Ascending aorta (tissue), 2 donors: ENCODE measurements at regions of chr19 and their contacts with region 1.

Region 1: DNA sequence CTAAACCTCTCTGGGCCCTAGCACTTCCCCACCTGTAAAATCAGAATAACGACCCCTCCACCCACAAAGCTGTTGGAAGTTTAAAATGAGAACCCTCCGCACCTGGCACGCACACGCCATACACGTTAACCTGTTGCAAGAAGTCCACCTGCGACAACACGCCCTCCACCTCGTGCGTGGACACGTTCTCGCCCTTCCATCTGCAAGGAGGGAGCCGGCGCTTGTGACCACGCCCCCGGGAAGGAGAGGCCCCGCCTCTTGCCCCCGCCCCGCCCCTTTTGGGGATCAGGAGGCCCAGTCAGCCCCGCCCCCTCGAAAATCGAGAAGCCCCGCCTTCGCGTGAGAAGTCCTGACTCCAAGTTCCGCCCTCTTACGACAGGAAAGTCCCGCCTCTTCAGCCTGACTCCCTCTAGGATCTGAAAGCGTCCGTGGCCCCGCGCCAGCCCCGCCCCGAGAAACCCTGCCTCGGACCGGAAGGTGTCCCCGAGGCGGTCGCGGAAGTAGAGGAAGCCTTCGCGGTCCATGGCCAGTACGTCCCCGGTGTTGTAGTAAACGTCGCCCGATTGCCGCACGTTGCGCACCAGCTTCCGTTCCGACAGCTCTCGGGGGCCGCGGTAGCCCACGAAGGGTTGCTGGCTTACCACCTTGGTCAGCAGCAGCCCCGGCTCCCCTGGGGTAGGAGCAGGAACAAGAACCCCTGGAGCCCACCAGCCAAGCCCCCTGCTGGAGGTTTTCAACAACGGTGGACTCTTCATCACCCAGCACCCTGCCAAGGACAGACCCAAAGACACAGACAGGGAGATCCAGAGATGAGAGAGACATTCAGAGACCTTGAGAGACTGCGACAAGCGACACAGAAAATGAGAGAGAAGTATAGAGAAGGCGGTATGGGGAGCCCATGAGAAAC is 12.5 kb downstream of the SLC27A5 start:
- DNase-seq: peak; percentile 96 to 100
- H3K4me3 ChIP-seq: peak overlapping the region; percentile 60 to 64
- H3K27ac ChIP-seq: peak overlapping the region; percentile 76 to 79
- H3K4me1 ChIP-seq: peaks cover 11 to 18% of the 10 kb centered on the region in 2 donors
- H3K27me3 ChIP-seq: no peaks in the 10 kb centered on the region
- CTCF ChIP-seq: peak in 2 of 3 experiments; percentile 10 to 42

Region 2: DNA sequence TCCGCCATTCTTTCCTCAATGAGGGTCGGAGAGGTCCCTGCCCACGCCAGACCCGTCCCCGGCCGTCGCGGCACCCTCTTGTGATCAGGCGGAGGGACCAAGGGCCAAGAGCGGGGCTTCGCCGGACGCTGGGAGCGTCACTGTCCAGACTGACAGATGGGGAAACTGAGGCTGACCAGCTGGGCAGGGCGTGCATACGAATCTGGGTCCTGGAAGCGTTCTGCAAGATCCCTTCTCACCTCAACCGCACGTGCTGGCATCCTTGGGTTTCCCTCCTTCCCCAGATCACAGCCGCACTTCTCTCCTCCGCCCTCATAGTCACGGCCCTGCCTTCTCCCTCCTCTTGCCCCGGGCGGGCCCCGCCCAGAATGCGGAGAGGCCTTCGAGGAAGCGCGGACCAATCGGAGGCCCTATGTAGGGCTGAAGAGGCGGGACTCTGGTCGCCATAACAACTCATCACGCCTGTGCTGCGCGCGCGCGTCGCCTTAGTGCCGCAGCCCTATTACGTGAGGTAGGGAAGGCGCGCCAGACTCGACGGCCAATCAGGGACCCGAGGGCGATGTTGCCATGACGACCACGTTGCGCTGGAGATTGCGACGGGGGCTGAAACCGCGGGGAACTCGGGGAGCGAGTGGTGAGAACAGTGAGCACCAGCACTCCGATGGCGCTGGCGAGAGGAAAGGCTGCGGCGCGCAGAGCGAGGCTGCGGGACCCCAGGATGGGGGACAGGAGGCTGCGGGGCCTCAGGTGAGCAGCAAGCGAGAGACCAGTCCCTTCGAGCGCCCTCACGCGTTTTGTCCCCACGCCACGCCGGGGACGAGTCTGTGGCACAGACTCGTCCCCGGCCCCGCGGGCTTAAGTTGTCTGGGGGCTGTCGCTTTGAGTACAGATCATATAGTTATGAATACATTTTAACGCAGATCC is 98.1 kb before region 1 on chr19:
- intact Hi-C with region 1: loop called (anchors 2 kb)
- DNase-seq: peak; percentile 99
- H3K4me3 ChIP-seq: peak overlapping the region; percentile 66 to 67
- H3K27ac ChIP-seq: no peak overlapping the region
- H3K4me1 ChIP-seq: peaks cover 7 to 10% of the 10 kb centered on the region in 2 donors
- H3K27me3 ChIP-seq: no peaks in the 10 kb centered on the region
- CTCF ChIP-seq: peak in 1 of 3 experiments; percentile 30

Region 3: GRCh38 chr19:58416604-58417003 is 82.7 kb before region 1 on chr19:
- intact Hi-C with region 1: no loop called
- DNase-seq: no peak
- H3K4me3 ChIP-seq: no peak overlapping the region
- H3K27ac ChIP-seq: no peak overlapping the region
- H3K4me1 ChIP-seq: no peaks in the 10 kb centered on the region
- H3K27me3 ChIP-seq: no peaks in the 10 kb centered on the region
- CTCF ChIP-seq: no peak

Region 4: GRCh38 chr19:58439576-58440554 is 59.4 kb before region 1 on chr19 and contains the start of gene ZNF132:
- intact Hi-C with region 1: no loop called
- DNase-seq: peak; percentile 98 to 99
- H3K4me3 ChIP-seq: peak within 1 kb of the TSS; percentile 71 to 72
- H3K27ac ChIP-seq: peak within 1 kb of the TSS; percentile 85 to 89
- H3K4me1 ChIP-seq: peaks cover 4 to 14% of the 10 kb centered on the region in 2 donors
- H3K27me3 ChIP-seq: no peaks in the 10 kb centered on the region
- CTCF ChIP-seq: no peak
- total RNA-seq, gene ZNF132: 5.2 TPM

Region 5: GRCh38 chr19:58451358-58452101 is 47.7 kb before region 1 on chr19 and contains the start of gene ZNF324B:
- intact Hi-C with region 1: loop called (anchors 1 kb)
- DNase-seq: peak; percentile 89 to 98
- H3K4me3 ChIP-seq: peak within 1 kb of the TSS; percentile 68 to 82
- H3K27ac ChIP-seq: peak within 1 kb of the TSS; percentile 35 to 54
- H3K4me1 ChIP-seq: no peaks in the 10 kb centered on the region
- H3K27me3 ChIP-seq: no peaks in the 10 kb centered on the region
- CTCF ChIP-seq: no peak
- total RNA-seq, gene ZNF324B: 2.2 TPM

Region 6: GRCh38 chr19:58466760-58467589 is 32.3 kb before region 1 on chr19 and contains the start of gene ZNF324:
- intact Hi-C with region 1: loop called (anchors 1 kb)
- DNase-seq: peak; percentile 93 to 99
- H3K4me3 ChIP-seq: peak within 1 kb of the TSS; percentile 95 to 96
- H3K27ac ChIP-seq: peak within 1 kb of the TSS; percentile 84 to 88
- H3K4me1 ChIP-seq: peaks cover 0 to 10% of the 10 kb centered on the region in 2 donors
- H3K27me3 ChIP-seq: no peaks in the 10 kb centered on the region
- CTCF ChIP-seq: no peak
- total RNA-seq, gene ZNF324: 2.1 TPM

Region 7: DNA sequence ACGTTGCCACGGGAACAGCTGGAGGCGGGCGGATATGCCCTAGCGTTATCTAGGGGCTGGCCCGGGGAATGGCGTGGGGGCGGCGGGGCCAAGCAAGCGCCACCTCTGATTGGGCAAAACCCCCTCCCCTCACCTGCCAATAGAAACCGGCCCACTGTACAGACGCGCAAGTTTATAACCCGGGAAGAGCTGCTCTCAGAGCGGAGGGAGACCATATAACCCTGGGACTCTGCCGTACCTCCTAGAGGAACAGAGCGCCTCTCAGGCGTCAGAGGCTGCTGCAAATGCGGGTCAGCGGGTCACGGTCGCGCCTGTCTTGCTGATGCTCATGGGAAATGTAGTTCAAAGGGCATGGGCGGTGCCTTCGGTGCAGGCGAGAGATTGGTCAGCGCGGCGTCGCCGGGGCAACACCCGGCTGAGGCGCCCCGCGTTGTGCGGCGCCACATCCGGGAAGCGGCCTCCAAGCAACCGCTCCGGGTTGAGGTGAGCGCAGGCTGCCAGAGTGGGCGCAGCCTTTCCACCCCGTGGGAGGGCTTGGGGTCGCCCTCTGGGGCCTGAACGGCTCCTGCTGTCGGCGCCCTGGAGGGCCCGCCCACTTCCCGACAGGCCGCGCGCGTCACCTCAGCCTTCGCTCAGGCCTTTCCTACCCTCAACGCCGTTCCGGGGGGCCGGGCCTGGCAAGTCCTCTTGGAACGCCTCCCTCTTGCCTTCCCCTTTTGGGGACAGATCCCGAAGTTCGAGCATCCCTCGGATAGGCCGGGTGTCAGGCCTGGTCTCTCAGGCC is 23.4 kb before region 1 on chr19 and contains the start of gene ZNF446:
- intact Hi-C with region 1: loop called (anchors 1 kb)
- DNase-seq: peak; percentile 93 to 99
- H3K4me3 ChIP-seq: peak within 1 kb of the TSS; percentile 65 to 68
- H3K27ac ChIP-seq: peak within 1 kb of the TSS; percentile 84 to 93
- H3K4me1 ChIP-seq: peaks cover 3 to 15% of the 10 kb centered on the region in 2 donors
- H3K27me3 ChIP-seq: no peaks in the 10 kb centered on the region
- CTCF ChIP-seq: no peak
- total RNA-seq, gene ZNF446: 42.7 TPM

Region 8: GRCh38 chr19:58543826-58544590 is 44.7 kb after region 1 on chr19 and contains the start of gene TRIM28:
- intact Hi-C with region 1: loop called (anchors 1 kb)
- DNase-seq: peak; percentile 95 to 99
- H3K4me3 ChIP-seq: peak within 1 kb of the TSS; percentile 75 to 82
- H3K27ac ChIP-seq: peak within 1 kb of the TSS; percentile 90 to 94
- H3K4me1 ChIP-seq: peaks cover 15 to 25% of the 10 kb centered on the region in 2 donors
- H3K27me3 ChIP-seq: no peaks in the 10 kb centered on the region
- CTCF ChIP-seq: peak in 1 of 3 experiments; percentile 6
- total RNA-seq, gene TRIM28: 222 TPM

Region 9: DNA sequence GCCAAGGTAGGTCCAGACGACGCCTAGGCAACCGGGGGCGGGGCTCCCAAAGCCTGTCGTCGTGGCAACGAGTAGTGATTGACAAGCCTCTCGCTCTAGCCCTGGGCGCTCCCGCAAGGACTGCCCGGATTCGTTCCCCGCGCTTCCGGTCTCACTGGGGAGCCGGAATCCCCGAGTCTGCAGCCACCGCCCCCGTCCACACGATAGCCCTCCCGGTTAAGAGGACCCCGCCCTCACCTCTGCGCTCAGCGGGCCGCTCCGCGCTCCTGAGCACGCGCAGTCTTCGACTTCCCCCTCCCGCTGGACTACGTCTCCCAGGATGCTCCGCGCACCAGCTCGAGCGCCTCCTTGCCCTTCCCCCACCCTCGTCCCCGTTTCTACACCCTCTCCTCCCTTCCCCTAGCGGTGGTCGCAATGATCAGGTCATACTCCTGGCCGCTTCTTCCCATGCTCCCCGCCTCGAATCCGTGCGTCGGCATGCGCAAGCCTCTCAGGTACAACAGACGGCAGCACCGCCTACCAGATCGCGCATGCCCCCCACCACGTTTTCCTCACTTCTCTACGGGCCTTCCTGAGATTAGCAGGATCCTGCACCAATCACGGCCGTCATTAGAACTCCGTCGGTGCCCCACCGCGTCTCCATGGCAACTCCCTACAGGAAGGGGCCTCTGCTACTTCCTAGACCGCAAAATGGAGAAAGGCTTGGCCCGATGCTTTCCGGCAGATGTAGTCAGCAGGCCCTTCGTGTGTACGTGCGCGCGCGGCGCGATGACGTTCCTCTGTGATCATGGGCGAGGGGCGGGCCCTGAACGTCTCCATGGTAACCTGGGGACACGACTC is 73.8 kb after region 1 on chr19 and contains the start of gene MZF1:
- intact Hi-C with region 1: loop called (anchors 1 kb)
- DNase-seq: peak; percentile 100
- H3K4me3 ChIP-seq: peak within 1 kb of the TSS; percentile 81 to 92
- H3K27ac ChIP-seq: peak within 1 kb of the TSS; percentile 95 to 98
- H3K4me1 ChIP-seq: peaks cover 4 to 20% of the 10 kb centered on the region in 2 donors
- H3K27me3 ChIP-seq: no peaks in the 10 kb centered on the region
- CTCF ChIP-seq: no peak
- total RNA-seq, gene MZF1: 77.1 TPM